ENCODE measurements at regions of chr3 and their contacts with region 1.

Region 1: DNA sequence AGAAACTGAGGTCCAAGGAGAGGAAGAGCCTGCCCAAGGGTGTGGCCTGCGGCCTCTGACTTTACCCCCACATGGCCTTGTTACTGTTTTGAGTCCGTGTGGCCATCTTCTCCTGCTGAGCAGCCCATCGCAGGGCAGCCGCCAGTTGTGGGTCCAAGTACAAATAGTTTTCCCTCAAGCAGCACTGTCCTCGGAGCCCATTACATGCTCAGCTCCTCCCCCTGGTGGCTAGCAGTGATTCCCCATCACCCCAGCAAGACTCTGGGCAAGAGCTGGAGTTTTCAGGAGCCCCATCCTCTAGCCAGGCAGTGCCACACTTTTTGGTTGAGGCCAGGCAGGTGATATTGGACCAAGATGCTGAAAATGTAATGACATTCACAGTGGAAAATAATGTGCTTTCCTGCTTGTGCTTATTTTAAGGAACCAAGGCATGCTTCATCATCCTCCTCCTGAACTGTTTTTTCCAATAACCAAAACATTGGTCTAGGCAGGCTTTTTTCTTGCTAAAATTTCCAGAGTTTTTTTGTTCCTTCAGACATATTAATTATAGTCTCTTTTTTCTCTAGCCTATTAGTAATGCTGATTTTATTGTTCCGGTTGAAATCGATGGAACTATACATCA is 23.2 kb upstream of the VILL start:
- DNase-seq: no peak
- H3K4me3 ChIP-seq: no peak overlapping the region
- CTCF ChIP-seq: peak; percentile 95

Region 2: DNA sequence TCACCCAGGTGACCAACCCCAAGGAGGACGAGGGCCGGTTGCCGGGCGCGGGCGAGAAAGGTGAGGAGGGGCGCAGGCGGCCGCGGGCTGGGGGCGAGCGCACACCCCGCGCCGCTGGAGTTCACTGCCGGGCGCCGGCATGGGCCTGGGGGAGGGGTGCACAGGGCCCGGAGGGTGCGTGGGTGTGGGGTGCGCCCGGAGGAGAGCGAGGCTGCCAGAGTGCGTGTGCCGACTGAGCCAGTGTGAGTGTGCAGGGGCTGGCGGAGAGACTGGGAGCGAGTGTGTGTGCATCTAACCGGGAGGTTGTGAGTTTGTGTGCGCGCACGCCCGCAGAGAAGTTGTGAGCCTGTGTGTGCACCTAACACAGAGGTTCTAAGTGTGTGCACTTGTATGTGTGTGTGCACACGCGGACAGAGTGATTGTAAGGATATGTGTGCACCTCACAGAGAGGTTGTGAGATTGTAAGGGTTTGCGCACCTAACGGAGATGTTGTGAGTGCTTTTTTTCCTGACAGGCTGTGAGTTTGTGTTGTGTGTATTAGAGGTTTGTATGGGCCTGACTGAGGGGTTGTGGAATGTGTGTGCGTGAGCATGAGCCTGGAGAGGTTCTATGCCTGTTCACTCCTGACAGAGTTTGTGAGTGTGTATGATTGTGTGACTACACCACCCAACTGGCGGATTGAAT is 105.0 kb before region 1 on chr3:
- CTCF ChIA-PET with region 1: interaction called, 13 read pairs
- POLR2A ChIA-PET with region 1: no interaction called
- DNase-seq: no peak
- H3K4me3 ChIP-seq: peak overlapping the region; percentile 81
- CTCF ChIP-seq: no peak

Region 3: GRCh38 chr3:37949866-37950265 is 17.5 kb before region 1 on chr3:
- CTCF ChIA-PET with region 1: interaction called, 47 read pairs
- POLR2A ChIA-PET with region 1: no interaction called
- DNase-seq: no peak
- H3K4me3 ChIP-seq: no peak overlapping the region
- CTCF ChIP-seq: no peak

Region 4: GRCh38 chr3:37979541-37980461 is 12.4 kb after region 1 on chr3:
- CTCF ChIA-PET with region 1: interaction called, 145 read pairs
- POLR2A ChIA-PET with region 1: no interaction called
- DNase-seq: no peak
- H3K4me3 ChIP-seq: no peak overlapping the region
- CTCF ChIP-seq: no peak

Region 5: DNA sequence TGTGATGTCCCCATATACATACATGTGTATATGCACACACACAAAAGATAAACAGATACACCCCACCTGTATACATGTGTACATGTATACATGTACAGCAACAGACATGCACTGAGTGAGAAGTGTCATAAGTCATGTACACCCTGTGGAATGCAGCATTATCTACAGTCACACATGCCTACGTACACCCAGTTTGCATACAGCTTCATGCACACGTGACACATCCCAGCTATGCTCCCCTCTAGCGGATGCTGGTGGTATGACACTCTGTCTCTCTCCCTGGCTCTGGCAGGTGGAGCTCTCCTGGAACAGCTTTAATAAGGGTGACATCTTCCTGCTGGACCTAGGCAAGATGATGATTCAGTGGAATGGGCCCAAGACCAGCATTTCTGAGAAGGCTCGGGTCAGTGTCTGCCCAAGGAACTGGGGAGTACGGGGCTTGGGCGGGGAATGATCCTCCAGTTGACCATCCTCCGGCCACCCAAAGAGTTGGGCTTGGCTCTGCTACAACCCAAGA is 29.5 kb after region 1 on chr3:
- CTCF ChIA-PET with region 1: interaction called, 20 read pairs
- POLR2A ChIA-PET with region 1: no interaction called
- DNase-seq: no peak
- H3K4me3 ChIP-seq: no peak overlapping the region
- CTCF ChIP-seq: peak; percentile 90

Measured in AG04449 (cell line).